CD4-positive, alpha-beta T cell (primary cell): ENCODE measurements at regions of chrX and their contacts with region 1.

Region 1: GRCh38 chrX:129754056-129755024 is 15.6 kb downstream of the XPNPEP2 start:
- DNase-seq: no peak
- ATAC-seq: no peak
- H3K4me3 ChIP-seq: no peak overlapping the region
- H3K4me3 Mint-ChIP-seq: peak overlapping the region; percentile 12
- H3K27ac ChIP-seq: no peak overlapping the region
- H3K27ac Mint-ChIP-seq: peak overlapping the region; percentile 76
- H3K4me1 ChIP-seq: peaks cover 52% of the 10 kb centered on the region
- H3K4me1 Mint-ChIP-seq: peaks cover 56% of the 10 kb centered on the region
- H3K27me3 ChIP-seq: no peaks in the 10 kb centered on the region
- H3K27me3 Mint-ChIP-seq: no peaks in the 10 kb centered on the region
- CTCF ChIP-seq: no peak

Region 2: DNA sequence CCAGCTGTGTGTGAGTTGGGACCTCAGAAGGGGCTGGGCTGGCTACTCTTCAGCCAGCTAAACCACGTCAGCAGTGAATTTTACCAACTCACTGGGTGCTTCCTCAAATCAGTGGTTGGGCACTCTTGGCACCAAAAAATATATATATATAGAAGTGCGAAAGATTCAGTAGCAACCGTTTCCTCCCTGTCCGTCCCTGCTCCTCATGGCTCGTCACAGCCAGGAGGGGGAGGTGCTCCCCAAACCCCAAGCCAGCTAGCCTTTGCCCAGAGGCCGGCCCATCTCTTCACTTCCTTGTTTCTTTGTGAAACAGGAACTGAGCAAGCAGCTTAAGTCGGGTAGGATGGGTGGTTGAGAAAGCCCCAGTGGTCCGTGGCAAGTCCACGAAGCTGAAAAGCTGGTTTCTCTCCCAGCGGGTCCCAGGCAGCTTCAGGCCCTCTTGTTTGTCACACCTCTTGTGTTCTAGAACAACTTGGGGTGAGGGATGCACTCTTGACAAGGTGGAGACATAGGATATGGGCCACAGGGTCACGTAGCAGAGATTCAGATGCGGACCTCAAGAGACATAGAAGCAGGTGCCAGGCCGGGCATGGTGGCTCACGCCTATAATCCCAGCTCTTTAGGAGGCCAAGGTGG is 18.6 kb after region 1 on chrX:
- CTCF ChIA-PET with region 1: interaction called, 9 read pairs
- POLR2A ChIA-PET with region 1: interaction called, 72 read pairs
- intact Hi-C with region 1: no loop called
- DNase-seq: peak in 6 of 14 experiments; percentile 18 to 80 (median 56)
- ATAC-seq: no peak
- H3K4me3 ChIP-seq: no peak overlapping the region
- H3K4me3 Mint-ChIP-seq: peak overlapping the region; percentile 68
- H3K27ac ChIP-seq: peak overlapping the region; percentile 40 to 66
- H3K27ac Mint-ChIP-seq: peak overlapping the region; percentile 99
- H3K4me1 ChIP-seq: peaks cover 97% of the 10 kb centered on the region
- H3K4me1 Mint-ChIP-seq: peaks cover 87% of the 10 kb centered on the region
- H3K27me3 ChIP-seq: no peaks in the 10 kb centered on the region
- H3K27me3 Mint-ChIP-seq: no peaks in the 10 kb centered on the region
- CTCF ChIP-seq: no peak

Region 3: DNA sequence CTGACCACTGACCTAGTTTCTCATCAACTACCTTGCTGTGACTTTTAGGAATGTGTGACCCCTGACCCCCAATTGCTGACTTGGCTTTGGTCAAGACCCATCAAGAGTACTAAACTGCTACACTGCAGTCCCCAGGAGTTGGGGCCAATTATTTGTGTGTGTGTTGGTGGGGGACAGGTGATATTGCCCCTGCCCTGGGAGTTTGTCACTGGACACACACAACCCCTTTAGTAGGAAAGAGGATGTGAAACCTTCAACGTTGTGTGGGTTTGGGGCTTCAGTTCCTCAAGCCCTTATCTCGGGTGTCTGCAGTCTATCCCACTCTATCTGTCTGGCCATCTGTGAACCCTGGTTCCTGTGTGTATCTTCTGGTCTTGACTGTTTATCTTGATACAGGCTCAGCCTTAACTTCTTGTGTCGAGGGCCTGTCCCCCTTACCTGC is 31.9 kb after region 1 on chrX:
- CTCF ChIA-PET with region 1: interaction called, 10 read pairs
- POLR2A ChIA-PET with region 1: interaction called, 72 read pairs
- intact Hi-C with region 1: loop called (anchors 2 to 5 kb)
- DNase-seq: no peak
- ATAC-seq: no peak
- H3K4me3 ChIP-seq: peak overlapping the region; percentile 37
- H3K4me3 Mint-ChIP-seq: peak overlapping the region; percentile 83
- H3K27ac ChIP-seq: peak overlapping the region; percentile 52 to 69
- H3K27ac Mint-ChIP-seq: peak overlapping the region; percentile 99
- H3K4me1 ChIP-seq: peaks cover 75% of the 10 kb centered on the region
- H3K4me1 Mint-ChIP-seq: peaks cover 56% of the 10 kb centered on the region
- H3K27me3 ChIP-seq: no peaks in the 10 kb centered on the region
- H3K27me3 Mint-ChIP-seq: no peaks in the 10 kb centered on the region
- CTCF ChIP-seq: no peak